Gastrocnemius medialis (tissue), 4 donors: ENCODE measurements at regions of chr1 and their contacts with region 1.

Region 1: DNA sequence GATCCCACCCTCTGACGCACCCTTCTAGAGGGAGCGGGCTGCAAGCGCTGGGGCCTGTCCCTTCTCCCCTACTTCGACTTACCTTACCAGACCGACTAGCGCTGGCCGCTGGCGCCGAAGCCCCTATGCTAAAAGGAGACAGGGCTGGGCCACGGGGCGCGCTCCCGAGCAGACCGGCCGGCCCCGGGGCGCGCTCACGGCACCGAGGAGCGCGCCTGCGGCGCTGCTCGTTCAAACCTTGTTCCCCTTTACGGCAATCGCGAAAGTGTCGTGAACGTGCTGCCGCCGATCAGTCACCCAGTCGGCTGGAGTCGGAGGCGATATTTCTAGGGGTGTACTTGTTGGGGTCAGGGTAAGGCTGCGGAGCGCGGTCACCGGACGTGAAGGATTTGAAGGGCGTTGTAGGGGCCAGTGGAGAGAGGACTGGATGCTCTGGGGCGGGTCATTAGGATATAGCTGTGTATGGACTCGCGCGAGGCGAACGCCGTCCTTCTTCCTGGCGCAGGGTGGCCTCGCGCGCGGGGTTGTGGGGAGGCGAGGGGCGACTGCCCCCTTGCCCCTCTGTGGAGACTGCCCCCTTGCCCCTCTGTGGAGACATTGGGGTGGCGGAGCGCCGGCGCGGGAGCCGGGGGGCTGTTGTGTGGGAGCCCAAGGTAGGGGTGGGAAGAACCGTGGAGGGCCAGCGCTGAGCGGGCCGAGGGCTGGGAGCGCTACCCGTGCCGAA is at the starts of genes CEPT1 and DRAM2:
- DNase-seq: peak; percentile 94
- ATAC-seq: peak; percentile 93 to 96
- H3K4me3 ChIP-seq: peak within 1 kb of the TSS; percentile 92 to 99 (median 96)
- H3K27ac ChIP-seq: peak within 1 kb of the TSS; percentile 94 to 98 (median 96)
- H3K4me1 ChIP-seq: peaks cover 28 to 42% of the 10 kb centered on the region in 2 donors
- H3K27me3 ChIP-seq: no peaks in the 10 kb centered on the region
- CTCF ChIP-seq: no peak
- POLR2A ChIP-seq: peak; percentile 58 to 69
- total RNA-seq, gene CEPT1: 8.2 to 14.8 (median 10.6) TPM
- total RNA-seq, gene DRAM2: 28.9 to 47.1 (median 36.7) TPM

Region 2: DNA sequence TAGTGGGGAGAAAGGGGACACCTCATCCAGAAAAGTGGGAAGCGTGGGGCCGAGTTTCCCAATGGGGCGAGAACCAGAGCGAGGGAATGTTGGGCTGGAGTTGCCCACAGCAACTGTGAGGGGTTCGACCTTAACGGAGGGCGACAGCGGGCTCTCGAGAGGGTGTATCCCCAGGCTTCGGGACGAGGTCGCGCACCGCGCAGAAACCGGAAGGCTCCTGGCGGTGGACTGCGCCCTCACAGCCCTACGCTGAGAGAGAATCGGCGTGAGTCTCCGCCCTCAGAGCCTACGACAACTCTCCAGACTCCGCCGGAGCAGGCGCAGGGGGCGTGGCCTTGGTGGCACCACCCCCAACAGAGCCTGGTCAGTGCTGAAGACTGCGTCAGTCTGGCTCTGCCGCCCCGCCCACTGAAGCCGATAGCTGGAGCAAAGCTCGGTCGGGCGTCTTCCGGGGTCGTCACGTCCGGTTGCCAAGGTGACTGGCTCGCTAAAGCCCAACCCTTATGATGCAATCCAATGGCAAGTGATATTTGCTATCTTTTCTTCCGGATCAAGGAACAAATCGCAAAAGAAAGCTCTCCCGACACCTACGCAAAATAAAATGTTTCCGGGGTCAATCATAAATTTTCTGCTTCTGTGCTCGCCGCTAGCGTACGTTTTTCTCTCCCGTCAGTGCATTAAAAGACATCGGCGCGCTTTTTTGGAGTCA is 176.3 kb before region 1 on chr1 and contains the start of gene LRIF1:
- in situ Hi-C with region 1: no loop called
- intact Hi-C with region 1: loop called (anchors 5 kb)
- DNase-seq: peak; percentile 98 to 99
- ATAC-seq: peak; percentile 96 to 97
- H3K4me3 ChIP-seq: peak within 1 kb of the TSS; percentile 76 to 83 (median 80)
- H3K27ac ChIP-seq: peak within 1 kb of the TSS; percentile 89 to 97 (median 92)
- H3K4me1 ChIP-seq: peaks cover 32 to 34% of the 10 kb centered on the region in 2 donors
- H3K27me3 ChIP-seq: peaks cover 12 to 26% (median 13%) of the 10 kb centered on the region in 3 donors
- CTCF ChIP-seq: peak; percentile 57 to 74 (median 61)
- POLR2A ChIP-seq: peak; percentile 93
- total RNA-seq, gene LRIF1: 8.3 to 16.7 (median 12.3) TPM

Region 3: GRCh38 chr1:111448918-111449702 is 309.0 kb after region 1 on chr1 and contains the starts of genes ATP5PB and WDR77:
- in situ Hi-C with region 1: no loop called
- intact Hi-C with region 1: loop called (anchors 5 kb)
- DNase-seq: peak; percentile 96 to 98
- ATAC-seq: peak; percentile 98 to 99
- H3K4me3 ChIP-seq: peak within 1 kb of the TSS; percentile 76 to 97 (median 88)
- H3K27ac ChIP-seq: peak within 1 kb of the TSS; percentile 83 to 96 (median 92)
- H3K4me1 ChIP-seq: peaks cover 40 to 42% of the 10 kb centered on the region in 2 donors
- H3K27me3 ChIP-seq: no peaks in the 10 kb centered on the region
- CTCF ChIP-seq: peak in 1 of 5 experiments; percentile 30
- POLR2A ChIP-seq: peak in 1 of 2 donors; percentile 42
- total RNA-seq, gene ATP5PB: 232 to 350 (median 266) TPM
- total RNA-seq, gene WDR77: 53.3 to 59.2 (median 56.7) TPM

Region 4: GRCh38 chr1:111672331-111672730 is 532.2 kb after region 1 on chr1:
- in situ Hi-C with region 1: no loop called
- intact Hi-C with region 1: no loop called
- DNase-seq: no peak
- ATAC-seq: no peak
- H3K4me3 ChIP-seq: no peak overlapping the region
- H3K27ac ChIP-seq: no peak overlapping the region
- H3K4me1 ChIP-seq: peaks cover 24 to 30% of the 10 kb centered on the region in 2 donors
- H3K27me3 ChIP-seq: no peaks in the 10 kb centered on the region
- CTCF ChIP-seq: no peak
- POLR2A ChIP-seq: no peak